Posterior cingulate gyrus (tissue), 11 donors: ENCODE measurements at regions of chr19 and their contacts with region 1.

Region 1: GRCh38 chr19:6279931-6280591 is at the start of gene MLLT1:
- DNase-seq: peak; percentile 98 to 100 (median 99)

Region 2: GRCh38 chr19:6218491-6219162 is 61.4 kb before region 1 on chr19:
- intact Hi-C with region 1: loop called (anchors 5 kb)
- DNase-seq: peak; percentile 69 to 98 (median 93)

Region 3: DNA sequence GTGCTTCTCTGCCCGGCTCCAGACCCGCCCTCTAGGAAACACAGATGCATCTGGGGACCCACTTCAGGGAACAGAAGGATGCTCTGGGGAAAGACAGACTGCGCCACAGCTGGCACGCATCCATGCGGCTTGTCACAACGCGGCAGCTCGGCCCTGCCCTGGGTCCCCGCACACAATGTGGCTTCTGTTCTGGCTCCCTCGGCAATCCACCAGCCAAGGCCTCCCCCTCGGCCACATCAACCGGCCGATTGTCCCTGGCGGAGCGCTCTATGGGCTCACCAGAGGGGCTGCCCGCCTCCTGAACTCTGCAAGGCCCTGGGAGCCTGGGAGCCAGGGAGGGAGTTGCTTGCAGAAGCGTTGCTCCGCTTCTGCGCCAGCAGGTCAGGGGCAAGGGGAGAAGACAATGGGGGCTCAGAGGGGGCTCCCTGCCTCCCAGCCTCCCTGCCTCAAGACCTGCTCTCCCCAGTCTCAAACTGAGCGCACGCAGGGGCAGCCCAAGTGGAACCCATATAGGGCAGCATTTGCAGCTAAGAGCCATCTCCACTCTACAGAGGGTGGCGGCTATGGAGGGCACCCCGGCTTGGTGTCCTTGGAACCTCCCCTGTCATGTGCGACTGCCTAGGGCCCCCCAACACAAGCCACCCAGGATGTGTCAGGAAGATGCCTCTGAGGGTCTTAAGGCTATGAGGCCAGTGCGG is 38.2 kb before region 1 on chr19:
- intact Hi-C with region 1: loop called (anchors 1 kb)
- DNase-seq: peak; percentile 85 to 99 (median 94)

Region 4: GRCh38 chr19:6362027-6362350 is 81.9 kb after region 1 on chr19:
- intact Hi-C with region 1: loop called (anchors 5 kb)
- DNase-seq: no peak